ENCODE measurements at regions of chr15 and their contacts with region 1.

Region 1: DNA sequence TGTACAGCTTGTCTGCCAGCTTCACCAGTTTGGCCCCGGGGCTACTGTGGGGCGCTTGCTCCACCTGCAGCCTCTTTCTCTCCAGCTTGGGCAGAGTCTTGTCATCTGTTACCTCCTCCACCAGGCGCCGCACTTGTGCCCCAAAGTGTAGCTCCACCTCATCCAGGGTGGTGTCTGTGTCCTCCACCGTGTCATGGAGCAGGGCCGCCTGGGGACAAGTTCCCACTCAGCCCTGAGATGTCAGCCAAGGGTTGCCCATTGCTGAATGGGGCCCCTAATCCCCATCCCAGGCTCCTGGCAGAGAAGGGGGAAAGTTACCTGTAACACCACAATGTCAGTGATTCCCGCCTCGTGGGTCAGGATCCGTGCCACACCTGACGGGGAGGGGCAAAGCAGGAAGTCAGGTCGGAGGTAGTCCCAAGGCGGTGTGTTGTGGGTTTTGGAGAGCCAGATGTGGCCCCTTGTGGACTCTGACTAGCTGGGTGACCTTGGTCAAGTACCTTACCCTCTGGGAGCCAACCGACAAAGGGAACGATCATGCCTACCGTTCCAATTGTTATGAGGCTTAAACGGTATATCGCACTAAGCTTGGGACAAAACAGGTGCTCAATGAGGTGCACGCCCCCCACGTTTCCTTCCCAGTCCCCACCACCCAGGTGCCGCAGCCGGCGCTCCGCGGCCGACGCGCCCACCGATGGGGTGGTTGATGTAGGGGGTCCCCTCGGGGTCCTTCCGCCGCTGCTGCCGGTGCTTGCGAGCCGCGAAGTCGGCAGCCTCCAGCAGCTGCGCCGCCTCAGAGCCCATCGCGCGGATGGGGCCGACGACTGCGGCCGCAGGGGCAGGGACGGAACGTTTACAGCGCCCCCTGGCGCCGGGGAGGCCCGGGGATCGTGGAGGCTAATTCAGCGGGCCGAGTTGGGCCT is at the start of gene HDDC3:
- DNase-seq: peak; percentile 85
- H3K4me3 Mint-ChIP-seq: peak within 1 kb of the TSS; percentile 92
- H3K27ac Mint-ChIP-seq: peak within 1 kb of the TSS; percentile 98
- H3K4me1 Mint-ChIP-seq: peaks cover 50% of the 10 kb centered on the region
- H3K27me3 Mint-ChIP-seq: no peaks in the 10 kb centered on the region
- total RNA-seq, gene HDDC3: 38.6 and 43.0 TPM in 2 replicates

Region 2: DNA sequence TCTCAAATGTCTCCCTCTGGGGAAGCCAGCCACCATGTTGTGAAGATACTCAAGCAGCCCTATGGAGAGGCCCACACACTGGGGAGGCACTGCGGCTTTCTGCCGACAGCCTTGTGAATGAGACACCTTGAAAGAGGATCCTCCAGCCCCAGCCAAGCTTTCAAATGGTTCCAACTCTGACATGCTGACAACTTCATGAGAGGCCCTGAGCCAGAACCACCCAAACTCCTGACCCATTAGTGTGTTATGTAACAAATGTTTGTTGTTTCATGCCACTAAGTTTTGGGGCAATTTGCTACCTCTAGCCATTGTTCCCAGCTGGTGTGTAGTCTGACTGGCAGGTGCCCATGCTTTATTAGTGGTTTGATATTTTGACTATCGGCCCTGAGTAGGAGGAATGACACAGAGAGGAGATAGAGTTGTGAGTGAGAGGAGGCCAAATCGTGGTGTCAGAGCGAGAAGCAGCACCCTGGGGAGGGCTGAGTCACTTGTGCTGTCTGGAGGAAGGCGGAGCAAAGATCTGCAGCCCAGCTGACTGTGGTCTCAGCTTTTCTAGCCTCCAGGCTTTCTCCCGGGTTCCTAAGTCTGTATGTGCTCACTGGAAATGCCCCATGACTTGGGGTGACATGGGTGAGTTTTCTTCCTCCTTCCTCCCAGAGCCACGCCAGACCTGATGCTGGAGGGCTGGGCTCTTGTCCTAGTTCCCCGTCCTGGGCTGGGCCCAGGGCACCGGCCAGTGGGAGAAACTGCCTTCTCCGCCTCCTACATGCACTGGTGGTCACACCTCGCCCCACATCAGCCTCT is 271.6 kb before region 1 on chr15:
- intact Hi-C with region 1: loop called (anchors 5 kb)
- DNase-seq: peak; percentile 73
- H3K4me3 Mint-ChIP-seq: peak overlapping the region; percentile 74
- H3K27ac Mint-ChIP-seq: peak overlapping the region; percentile 82
- H3K4me1 Mint-ChIP-seq: peaks cover 72% of the 10 kb centered on the region
- H3K27me3 Mint-ChIP-seq: no peaks in the 10 kb centered on the region

Region 3: DNA sequence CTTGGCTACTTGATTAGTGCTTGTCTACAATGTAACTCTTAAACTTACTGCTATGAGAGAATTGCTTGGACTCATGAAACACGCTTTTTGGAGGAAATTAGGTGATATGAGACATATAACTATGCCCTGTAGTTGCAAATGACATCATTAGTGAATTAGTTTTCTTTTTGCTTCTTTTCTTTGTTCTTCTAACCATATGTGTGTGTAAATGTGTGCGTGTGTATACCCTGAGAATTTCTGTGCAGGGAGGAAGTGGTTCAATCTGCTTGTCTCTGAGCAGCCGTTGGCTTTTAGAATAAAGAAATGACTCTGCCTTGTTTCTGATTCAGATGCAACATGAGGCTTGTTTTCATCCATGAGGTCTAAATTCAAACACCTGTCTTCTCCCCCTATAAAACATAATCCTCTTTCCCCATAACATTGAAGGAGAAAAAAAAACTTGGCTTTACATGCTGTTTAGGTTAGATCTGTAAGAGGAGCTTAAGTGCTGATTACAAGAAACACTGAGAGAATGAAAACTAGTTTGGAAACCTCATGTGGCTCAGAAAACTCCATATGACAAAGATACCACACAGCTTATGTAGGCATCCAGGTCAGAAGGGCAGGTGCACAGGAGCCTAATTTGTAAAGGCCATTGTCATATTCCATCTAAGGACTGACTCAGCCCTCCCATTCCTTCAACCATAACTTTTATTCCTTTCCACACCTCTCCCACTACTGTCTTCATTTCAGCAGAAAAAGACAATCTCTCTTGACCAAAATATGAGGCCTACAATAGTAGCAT is 245.4 kb before region 1 on chr15:
- intact Hi-C with region 1: loop called (anchors 5 kb)
- DNase-seq: peak; percentile 53
- H3K4me3 Mint-ChIP-seq: peak overlapping the region; percentile 30
- H3K27ac Mint-ChIP-seq: peak overlapping the region; percentile 98
- H3K4me1 Mint-ChIP-seq: peaks cover 50% of the 10 kb centered on the region
- H3K27me3 Mint-ChIP-seq: no peaks in the 10 kb centered on the region

Region 4: GRCh38 chr15:90860942-90861675 is 70.9 kb before region 1 on chr15:
- intact Hi-C with region 1: no loop called
- DNase-seq: no peak
- H3K4me3 Mint-ChIP-seq: no peak overlapping the region
- H3K27ac Mint-ChIP-seq: no peak overlapping the region
- H3K4me1 Mint-ChIP-seq: peaks cover 55% of the 10 kb centered on the region
- H3K27me3 Mint-ChIP-seq: no peaks in the 10 kb centered on the region

Region 5: DNA sequence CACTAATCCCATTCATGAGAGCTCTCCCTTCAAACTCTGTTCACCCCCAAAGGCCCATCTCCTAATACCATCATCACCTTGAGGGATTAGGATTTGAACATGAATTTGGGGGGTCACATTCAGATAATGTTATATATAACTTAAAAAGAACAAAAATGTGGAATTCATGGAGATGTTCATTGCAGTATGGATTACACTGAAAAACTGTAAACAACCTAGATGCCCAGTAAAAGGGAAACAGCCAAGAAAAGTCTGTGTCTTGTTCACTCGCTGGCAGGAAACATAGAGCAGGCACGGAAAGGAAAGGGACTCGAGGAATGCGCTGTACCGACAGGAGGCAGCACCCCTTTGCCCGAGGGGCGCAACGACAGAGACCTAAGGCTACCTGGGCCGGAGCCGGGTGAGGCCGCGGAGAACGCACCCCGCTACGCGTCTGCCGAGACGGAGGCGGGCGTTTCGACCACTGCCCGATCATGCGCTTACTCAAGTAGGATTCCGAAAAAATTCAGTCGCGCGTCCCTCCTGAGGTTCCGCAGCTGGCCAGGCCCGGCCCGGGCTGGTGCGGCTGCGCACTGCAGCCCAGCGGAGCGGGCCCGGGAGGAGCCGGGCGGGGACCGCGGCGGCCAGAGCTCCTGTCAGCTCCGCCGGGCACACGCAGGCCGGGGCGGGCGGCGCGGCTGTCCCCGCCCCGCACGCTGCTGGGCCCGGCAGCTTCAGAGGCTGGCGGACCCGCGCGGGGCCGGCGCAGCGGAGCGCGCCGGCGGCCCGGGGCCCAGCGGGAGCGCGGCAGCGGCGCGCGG is 29.8 kb before region 1 on chr15:
- intact Hi-C with region 1: loop called (anchors 1 kb)
- DNase-seq: peak; percentile 70
- H3K4me3 Mint-ChIP-seq: peak overlapping the region; percentile 78
- H3K27ac Mint-ChIP-seq: peak overlapping the region; percentile 80
- H3K4me1 Mint-ChIP-seq: peaks cover 24% of the 10 kb centered on the region
- H3K27me3 Mint-ChIP-seq: no peaks in the 10 kb centered on the region

Region 6: GRCh38 chr15:90954712-90955671 is 23.0 kb after region 1 on chr15 and contains the start of gene RCCD1:
- intact Hi-C with region 1: loop called (anchors 1 kb)
- DNase-seq: peak; percentile 91
- H3K4me3 Mint-ChIP-seq: peak within 1 kb of the TSS; percentile 85
- H3K27ac Mint-ChIP-seq: peak within 1 kb of the TSS; percentile 93
- H3K4me1 Mint-ChIP-seq: peaks cover 15% of the 10 kb centered on the region
- H3K27me3 Mint-ChIP-seq: no peaks in the 10 kb centered on the region
- total RNA-seq, gene RCCD1: 30.1 and 31.0 TPM in 2 replicates

Region 7: GRCh38 chr15:90994417-90995311 is 62.7 kb after region 1 on chr15 and contains the start of gene PRC1:
- intact Hi-C with region 1: loop called (anchors 2 kb)
- DNase-seq: peak; percentile 98
- H3K4me3 Mint-ChIP-seq: peak within 1 kb of the TSS; percentile 100
- H3K27ac Mint-ChIP-seq: peak within 1 kb of the TSS; percentile 100
- H3K4me1 Mint-ChIP-seq: peaks cover 25% of the 10 kb centered on the region
- H3K27me3 Mint-ChIP-seq: no peaks in the 10 kb centered on the region
- total RNA-seq, gene PRC1: 91.8 and 95.2 TPM in 2 replicates

Region 8: DNA sequence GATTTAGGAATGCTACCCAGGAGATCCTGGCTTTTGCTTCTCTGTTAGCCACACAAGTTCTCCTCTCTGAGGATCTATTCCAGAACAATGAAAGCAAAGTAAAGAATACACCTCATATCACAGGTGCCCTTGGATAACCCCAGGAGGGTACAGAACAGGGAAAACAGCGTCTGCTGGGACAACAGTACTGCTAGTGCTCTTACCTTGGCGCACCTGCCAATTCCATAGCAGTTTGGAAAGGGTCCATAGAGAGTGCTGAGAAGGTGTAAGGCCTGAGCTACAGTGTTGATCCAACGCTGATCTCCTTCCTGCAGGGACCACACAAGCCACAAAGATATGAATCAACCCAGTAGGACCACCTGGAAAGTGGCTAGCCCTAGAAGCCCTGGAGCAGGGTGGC is 75.3 kb after region 1 on chr15:
- intact Hi-C with region 1: no loop called
- DNase-seq: no peak
- H3K4me3 Mint-ChIP-seq: no peak overlapping the region
- H3K27ac Mint-ChIP-seq: no peak overlapping the region
- H3K4me1 Mint-ChIP-seq: no peaks in the 10 kb centered on the region
- H3K27me3 Mint-ChIP-seq: no peaks in the 10 kb centered on the region